Naive thymus-derived CD4-positive, alpha-beta T cell (primary cell): ENCODE measurements at regions of chr2 and their contacts with region 1.

Region 1: DNA sequence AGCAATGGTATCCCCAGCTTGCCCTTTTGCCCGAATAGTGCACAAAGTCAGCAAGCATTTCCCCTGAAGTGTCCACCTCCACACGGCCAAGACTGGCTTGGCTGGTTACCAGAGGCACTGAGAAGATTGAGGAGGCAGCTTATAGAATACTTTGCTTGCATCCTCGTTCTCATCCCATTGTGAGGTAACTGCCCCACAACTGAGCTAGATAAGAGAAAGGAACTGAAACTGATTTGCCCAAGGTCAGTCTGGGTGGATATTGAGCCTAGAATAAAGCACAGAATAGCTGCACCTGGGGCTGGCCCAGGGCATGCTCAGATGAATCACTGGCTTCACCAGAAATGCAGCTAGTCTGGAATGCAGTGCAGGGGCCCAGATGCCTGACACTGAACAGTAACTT is 32.7 kb upstream of the MAP4K3 start:
- DNase-seq: no peak
- ATAC-seq: peak; percentile 40
- H3K4me3 ChIP-seq: no peak overlapping the region
- H3K4me3 Mint-ChIP-seq: no peak overlapping the region
- H3K27ac ChIP-seq: no peak overlapping the region
- H3K27ac Mint-ChIP-seq: no peak overlapping the region
- H3K4me1 ChIP-seq: no peaks in the 10 kb centered on the region
- H3K4me1 Mint-ChIP-seq: peaks cover 0 to 13% (median 0%) of the 10 kb centered on the region in 7 donors
- H3K27me3 ChIP-seq: no peaks in the 10 kb centered on the region
- H3K27me3 Mint-ChIP-seq: no peaks in the 10 kb centered on the region

Region 2: GRCh38 chr2:39431592-39432316 is 38.1 kb before region 1 on chr2:
- CTCF ChIA-PET with region 1: no interaction called
- POLR2A ChIA-PET with region 1: no interaction called
- intact Hi-C with region 1: loop called in 1 of 2 experiments (anchors 5 kb)
- DNase-seq: peak in 3 of 9 donors; percentile 7 to 26 (median 14)
- ATAC-seq: peak; percentile 25
- H3K4me3 ChIP-seq: no peak overlapping the region
- H3K4me3 Mint-ChIP-seq: peak overlapping the region in 1 of 10 donors; percentile 15
- H3K27ac ChIP-seq: no peak overlapping the region
- H3K27ac Mint-ChIP-seq: peak overlapping the region in 6 of 9 donors; percentile 4 to 53 (median 33)
- H3K4me1 ChIP-seq: peaks cover 9 to 30% of the 10 kb centered on the region in 2 donors
- H3K4me1 Mint-ChIP-seq: peaks cover 37 to 86% (median 80%) of the 10 kb centered on the region in 7 donors
- H3K27me3 ChIP-seq: no peaks in the 10 kb centered on the region
- H3K27me3 Mint-ChIP-seq: no peaks in the 10 kb centered on the region